GM12878 (cell line): ENCODE measurements at regions of chr1 and their contacts with region 1.

Region 1: GRCh38 chr1:21368515-21369289 is 71.2 kb upstream of the NBPF3 start:
- DNase-seq: no peak
- ATAC-seq: peak; percentile 86
- H3K4me3 ChIP-seq: no peak overlapping the region
- H3K27ac ChIP-seq: no peak overlapping the region
- H3K4me1 ChIP-seq: no peaks in the 10 kb centered on the region; the same call in 1 of the 2 replicates
- H3K27me3 ChIP-seq: no peaks in the 10 kb centered on the region
- CTCF ChIP-seq: peak; percentile 98 to 100 (median 99); a peak in 5 of 6 replicates
- EP300 ChIP-seq: no peak
- POLR2A ChIP-seq: no peak
- RAD21 ChIP-seq: peak; percentile 100

Region 2: GRCh38 chr1:21200767-21201166 is 167.9 kb before region 1 on chr1:
- CTCF ChIA-PET with region 1: interaction called, 12 read pairs
- POLR2A ChIA-PET with region 1: no interaction called
- RAD21 ChIA-PET with region 1: interaction called, 12 read pairs
- SMC1A ChIA-PET with region 1: interaction called, 4 read pairs
- in situ Hi-C with region 1: no loop called
- intact Hi-C with region 1: no loop called
- DNase-seq: no peak
- ATAC-seq: no peak
- H3K4me3 ChIP-seq: no peak overlapping the region
- H3K27ac ChIP-seq: no peak overlapping the region
- H3K4me1 ChIP-seq: no peaks in the 10 kb centered on the region
- H3K27me3 ChIP-seq: no peaks in the 10 kb centered on the region
- CTCF ChIP-seq: no peak
- EP300 ChIP-seq: no peak
- POLR2A ChIP-seq: no peak
- RAD21 ChIP-seq: no peak

Region 3: DNA sequence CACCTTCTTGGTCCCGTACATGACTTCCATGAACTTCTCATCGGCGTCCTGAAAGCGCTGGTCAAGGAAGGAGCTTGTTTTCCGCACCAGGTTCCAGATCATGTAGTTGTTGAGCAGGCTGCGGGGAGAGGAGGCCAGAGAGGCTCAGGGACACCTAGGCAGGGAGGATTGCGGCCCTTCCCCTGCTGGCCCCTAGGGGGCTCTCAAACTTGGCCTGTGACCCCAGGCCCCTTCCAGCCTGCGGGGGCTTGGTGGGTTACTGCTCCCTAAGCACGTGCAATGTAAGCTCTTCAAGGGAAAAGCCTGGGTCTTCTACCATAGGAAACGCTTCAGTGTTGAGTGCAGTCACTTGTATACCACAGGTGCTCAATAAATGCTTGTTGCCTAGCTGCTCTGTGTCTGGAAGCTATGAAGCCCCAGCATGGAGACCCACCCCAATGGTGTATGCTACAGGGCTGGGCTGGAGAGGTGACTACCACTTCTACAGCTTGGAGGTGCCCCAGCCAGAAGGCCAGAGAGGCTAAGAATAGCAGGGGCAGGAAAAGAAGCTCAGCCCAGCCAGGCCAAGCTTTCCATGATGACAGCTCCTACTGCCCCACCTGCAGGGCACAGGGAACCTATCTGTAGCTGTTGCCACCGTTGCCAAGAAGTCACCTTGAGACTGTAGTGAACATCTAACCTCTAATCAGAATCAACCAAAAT is 123.6 kb before region 1 on chr1:
- CTCF ChIA-PET with region 1: interaction called, 9 read pairs
- POLR2A ChIA-PET with region 1: no interaction called
- RAD21 ChIA-PET with region 1: interaction called, 6 read pairs
- SMC1A ChIA-PET with region 1: interaction called, 10 read pairs
- in situ Hi-C with region 1: no loop called
- intact Hi-C with region 1: no loop called
- DNase-seq: no peak
- ATAC-seq: peak; percentile 53; the same call in 2 of the 3 replicates
- H3K4me3 ChIP-seq: no peak overlapping the region
- H3K27ac ChIP-seq: no peak overlapping the region
- H3K4me1 ChIP-seq: no peaks in the 10 kb centered on the region
- H3K27me3 ChIP-seq: no peaks in the 10 kb centered on the region
- CTCF ChIP-seq: peak in 2 of 3 experiments; percentile 44 to 52; a peak in 4 of 6 replicates
- EP300 ChIP-seq: no peak
- POLR2A ChIP-seq: no peak
- RAD21 ChIP-seq: no peak

Region 4: DNA sequence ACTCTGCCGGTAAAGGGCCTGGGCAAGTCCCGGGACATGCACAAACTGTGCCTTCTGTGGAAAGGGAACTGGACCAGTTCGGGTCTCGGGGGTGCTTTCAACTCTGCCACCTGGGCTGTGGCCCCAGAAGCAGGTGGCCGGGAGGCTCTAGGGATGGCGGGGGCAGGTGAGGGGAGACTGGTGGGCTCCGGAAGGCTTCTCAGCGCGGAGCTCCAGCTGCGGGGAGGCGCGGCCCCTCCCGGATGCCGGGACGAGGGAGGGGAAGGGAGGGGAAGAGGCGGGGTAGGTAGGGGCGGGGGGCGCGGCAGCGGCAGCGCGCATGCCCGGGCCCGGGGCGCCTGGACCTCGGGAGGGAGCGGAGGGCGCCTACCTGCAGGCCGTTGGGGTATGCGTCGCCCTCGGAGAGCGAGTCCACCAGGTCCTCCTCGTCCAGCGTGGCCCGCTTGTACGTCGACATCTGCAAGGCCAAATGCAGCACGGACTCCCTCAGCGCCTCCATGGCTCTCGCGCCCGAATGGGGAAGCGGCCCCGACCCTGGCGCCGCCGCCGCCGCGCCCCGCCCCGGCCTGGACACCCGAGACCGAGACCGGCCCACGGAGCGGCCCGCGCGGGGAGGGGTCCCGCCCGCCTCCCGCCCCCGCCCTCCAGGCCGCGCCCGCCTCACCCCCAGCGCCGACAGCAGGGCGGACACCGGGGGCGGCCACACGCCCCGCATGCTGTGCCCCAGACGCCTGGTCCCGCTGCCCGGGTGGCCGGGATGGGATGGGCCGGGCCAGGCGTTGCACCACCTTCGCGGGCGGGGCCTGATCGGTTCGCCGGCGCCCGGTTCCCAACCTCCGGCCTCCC is 78.8 kb before region 1 on chr1 and contains the start of gene ECE1:
- CTCF ChIA-PET with region 1: interaction called, 19 read pairs
- POLR2A ChIA-PET with region 1: interaction called, 5 read pairs
- RAD21 ChIA-PET with region 1: interaction called, 19 read pairs
- SMC1A ChIA-PET with region 1: interaction called, 11 read pairs
- in situ Hi-C with region 1: no loop called
- intact Hi-C with region 1: no loop called
- DNase-seq: no peak
- ATAC-seq: no peak
- H3K4me3 ChIP-seq: peak within 1 kb of the TSS; percentile 80; the same call in 1 of the 2 replicates
- H3K27ac ChIP-seq: peak within 1 kb of the TSS; percentile 72
- H3K4me1 ChIP-seq: peaks cover 55% of the 10 kb centered on the region
- H3K27me3 ChIP-seq: no peaks in the 10 kb centered on the region
- CTCF ChIP-seq: no peak
- EP300 ChIP-seq: no peak
- POLR2A ChIP-seq: peak; percentile 50
- RAD21 ChIP-seq: no peak
- polyA plus RNA-seq, gene ECE1: 0.97 to 2.4 TPM

Region 5: GRCh38 chr1:21344750-21345443 is 23.8 kb before region 1 on chr1:
- CTCF ChIA-PET with region 1: interaction called, 8 read pairs
- POLR2A ChIA-PET with region 1: interaction called, 7 read pairs
- RAD21 ChIA-PET with region 1: interaction called, 10 read pairs
- SMC1A ChIA-PET with region 1: interaction called, 7 read pairs
- in situ Hi-C with region 1: no loop called
- intact Hi-C with region 1: no loop called
- DNase-seq: no peak
- ATAC-seq: peak; percentile 19
- H3K4me3 ChIP-seq: peak overlapping the region; percentile 98
- H3K27ac ChIP-seq: peak overlapping the region; percentile 43; the same call in 1 of the 2 replicates
- H3K4me1 ChIP-seq: peaks cover 34% of the 10 kb centered on the region
- H3K27me3 ChIP-seq: peaks cover 0 to 2% of the 10 kb centered on the region in 2 experiments; a peak in 1 of 4 replicates
- CTCF ChIP-seq: no peak
- EP300 ChIP-seq: no peak
- POLR2A ChIP-seq: no peak
- RAD21 ChIP-seq: no peak

Region 6: GRCh38 chr1:21434394-21434793 is 65.7 kb after region 1 on chr1:
- CTCF ChIA-PET with region 1: no interaction called
- POLR2A ChIA-PET with region 1: no interaction called
- RAD21 ChIA-PET with region 1: no interaction called
- SMC1A ChIA-PET with region 1: no interaction called
- in situ Hi-C with region 1: no loop called
- intact Hi-C with region 1: no loop called
- DNase-seq: no peak
- ATAC-seq: no peak
- H3K4me3 ChIP-seq: no peak overlapping the region
- H3K27ac ChIP-seq: no peak overlapping the region
- H3K4me1 ChIP-seq: no peaks in the 10 kb centered on the region
- H3K27me3 ChIP-seq: no peaks in the 10 kb centered on the region
- CTCF ChIP-seq: no peak
- EP300 ChIP-seq: no peak
- POLR2A ChIP-seq: no peak
- RAD21 ChIP-seq: no peak

Region 7: GRCh38 chr1:21478974-21479373 is 110.3 kb after region 1 on chr1:
- CTCF ChIA-PET with region 1: no interaction called
- POLR2A ChIA-PET with region 1: no interaction called
- RAD21 ChIA-PET with region 1: no interaction called
- SMC1A ChIA-PET with region 1: no interaction called
- in situ Hi-C with region 1: no loop called
- intact Hi-C with region 1: no loop called
- DNase-seq: no peak
- ATAC-seq: no peak
- H3K4me3 ChIP-seq: no peak overlapping the region
- H3K27ac ChIP-seq: no peak overlapping the region
- H3K4me1 ChIP-seq: no peaks in the 10 kb centered on the region
- H3K27me3 ChIP-seq: 0 out of 4 replicates have a peak, but pooled peaks cover 0 to 3% of the 10 kb centered on the region in 2 experiments
- CTCF ChIP-seq: no peak
- EP300 ChIP-seq: no peak
- POLR2A ChIP-seq: no peak
- RAD21 ChIP-seq: no peak

Region 8: GRCh38 chr1:21534674-21535378 is 166.1 kb after region 1 on chr1:
- CTCF ChIA-PET with region 1: interaction called, 18 read pairs
- POLR2A ChIA-PET with region 1: interaction called, 5 read pairs
- RAD21 ChIA-PET with region 1: interaction called, 11 read pairs
- SMC1A ChIA-PET with region 1: interaction called, 4 read pairs
- in situ Hi-C with region 1: no loop called
- intact Hi-C with region 1: no loop called
- DNase-seq: no peak
- ATAC-seq: peak; percentile 95
- H3K4me3 ChIP-seq: no peak overlapping the region
- H3K27ac ChIP-seq: no peak overlapping the region
- H3K4me1 ChIP-seq: no peaks in the 10 kb centered on the region
- H3K27me3 ChIP-seq: no peaks in the 10 kb centered on the region; a peak in 1 of 4 replicates
- CTCF ChIP-seq: peak; percentile 56 to 76 (median 60); a peak in 5 of 6 replicates
- EP300 ChIP-seq: no peak
- POLR2A ChIP-seq: no peak
- RAD21 ChIP-seq: peak; percentile 68